Head of caudate nucleus (tissue), 42 donors: ENCODE measurements at regions of chr20 and their contacts with region 1.

Region 1: GRCh38 chr20:50120897-50121693 is 8.1 kb upstream of the UBE2V1 start:
- DNase-seq: peak; percentile 66 to 91 (median 81)

Region 2: GRCh38 chr20:50003253-50003656 is 117.8 kb before region 1 on chr20:
- intact Hi-C with region 1: no loop called
- DNase-seq: no peak

Region 3: DNA sequence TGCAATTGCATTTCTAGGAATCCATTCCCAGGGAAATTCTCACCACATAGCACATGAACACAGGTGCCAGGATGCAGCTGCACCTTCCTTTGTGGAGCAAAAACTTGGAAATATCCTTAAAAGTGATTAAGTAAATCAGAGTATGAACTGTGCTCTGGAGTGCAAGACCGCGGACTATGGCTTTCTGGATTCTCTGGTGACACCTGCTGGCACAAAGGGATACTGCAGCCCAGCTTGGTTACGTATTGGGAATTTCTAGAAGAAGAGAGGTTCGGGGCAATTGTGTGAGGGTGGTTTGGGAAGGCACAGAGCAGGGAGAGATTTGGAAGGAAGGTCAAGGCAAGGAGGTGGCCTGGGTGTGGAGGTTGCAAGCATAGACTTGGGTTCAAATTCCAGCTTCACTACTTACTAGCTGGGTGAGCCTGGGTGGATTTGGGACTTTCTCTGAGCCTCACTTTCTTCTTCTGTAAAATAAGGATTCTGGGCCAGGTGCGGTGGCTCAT is 48.3 kb after region 1 on chr20:
- intact Hi-C with region 1: loop called (anchors 2 kb)
- DNase-seq: peak in 40 of 42 donors; percentile 69 to 94 (median 84)